Left colon (tissue), 2 donors: ENCODE measurements at regions of chr22 and their contacts with region 1.

Region 1: GRCh38 chr22:41403532-41404318 is 22.0 kb downstream of the TEF start:
- DNase-seq: peak; percentile 82 to 92
- ATAC-seq: peak; percentile 83

Region 2: GRCh38 chr22:41226723-41227655 is 176.7 kb before region 1 on chr22:
- intact Hi-C with region 1: no loop called
- DNase-seq: peak in 1 of 2 donors; percentile 15
- ATAC-seq: no peak

Region 3: DNA sequence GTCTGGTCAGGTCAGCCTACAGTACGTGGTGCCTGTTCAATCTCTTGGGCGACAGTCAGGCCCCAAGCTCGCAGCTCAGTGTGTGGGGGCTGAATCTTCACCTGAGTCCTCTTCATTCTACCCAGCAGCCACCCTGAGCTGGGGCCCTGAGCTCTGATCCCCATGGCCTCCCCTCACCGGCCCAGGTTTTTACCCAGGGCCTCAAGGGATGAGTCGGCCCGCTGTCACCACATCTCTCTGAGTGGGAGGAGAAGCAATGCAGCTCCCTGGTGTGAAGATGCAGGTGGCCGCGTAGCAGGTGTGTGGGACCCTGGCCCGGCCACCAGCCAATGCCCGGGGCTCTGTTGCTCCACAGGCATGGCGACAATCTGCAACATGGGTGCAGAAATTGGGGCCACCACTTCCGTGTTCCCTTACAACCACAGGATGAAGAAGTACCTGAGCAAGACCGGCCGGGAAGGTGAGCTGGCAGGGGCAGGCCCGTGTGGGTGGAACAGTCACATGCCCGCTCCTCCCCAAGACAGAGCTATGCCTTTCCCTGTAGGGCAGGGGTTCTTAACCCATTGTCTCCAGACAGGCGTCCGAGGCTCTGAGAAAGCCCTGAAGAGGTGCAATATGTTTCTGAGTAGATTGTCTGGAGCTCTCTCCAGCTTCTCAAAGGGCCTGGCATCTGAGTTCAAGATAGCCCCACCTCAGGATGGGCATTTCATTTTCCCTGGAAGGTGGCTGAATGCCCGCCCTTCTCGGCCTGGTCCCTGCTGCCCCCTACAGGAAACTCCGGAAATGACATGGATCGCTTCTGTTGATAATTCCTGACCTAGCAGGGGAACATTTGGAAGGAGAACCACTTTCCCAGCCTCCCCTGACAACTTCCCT is 113.7 kb after region 1 on chr22:
- intact Hi-C with region 1: loop called in 1 of 2 experiments (anchors 5 kb)
- DNase-seq: peak in 1 of 2 donors; percentile 75
- ATAC-seq: peak; percentile 71